ENCODE measurements at regions of chr6 and their contacts with region 1.

Region 1: GRCh38 chr6:56445818-56446217 is 196.9 kb downstream of the DST start:
- DNase-seq: no peak
- ATAC-seq: peak; percentile 57 to 94 (median 74)
- H3K4me3 ChIP-seq: no peak overlapping the region
- H3K27ac ChIP-seq: peak overlapping the region in 4 of 10 donors; percentile 14 to 60 (median 26)
- H3K4me1 ChIP-seq: peaks cover 0 to 36% (median 23%) of the 10 kb centered on the region in 9 donors
- H3K27me3 ChIP-seq: no peaks in the 10 kb centered on the region
- CTCF ChIP-seq: no peak

Region 2: DNA sequence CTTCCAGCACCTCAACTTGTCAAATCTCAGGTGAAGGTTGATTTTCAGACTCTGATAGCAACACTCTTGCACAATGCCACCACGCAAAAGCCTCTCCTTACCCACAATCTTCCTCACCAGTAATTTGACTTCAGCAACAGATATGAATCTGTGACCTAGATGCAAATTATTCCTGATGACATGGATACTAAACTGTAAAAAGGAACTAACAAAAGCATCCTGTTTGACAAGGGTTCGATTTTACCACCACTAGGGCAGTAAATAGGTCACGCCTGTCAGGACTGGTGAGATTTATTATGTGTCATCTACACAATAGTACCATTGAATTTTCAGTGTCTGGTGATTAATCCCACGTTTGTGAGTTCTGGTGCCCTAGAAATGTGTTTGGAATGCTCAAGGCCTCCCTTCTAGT is 64.0 kb before region 1 on chr6:
- intact Hi-C with region 1: loop called in 2 of 10 experiments (anchors 10 kb)
- DNase-seq: no peak
- ATAC-seq: no peak
- H3K4me3 ChIP-seq: no peak overlapping the region
- H3K27ac ChIP-seq: no peak overlapping the region
- H3K4me1 ChIP-seq: peaks cover 0 to 6% (median 0%) of the 10 kb centered on the region in 9 donors
- H3K27me3 ChIP-seq: no peaks in the 10 kb centered on the region
- CTCF ChIP-seq: no peak

Region 3: GRCh38 chr6:56524891-56525703 is 79.3 kb after region 1 on chr6:
- intact Hi-C with region 1: no loop called
- DNase-seq: no peak
- ATAC-seq: peak in 5 of 8 donors; percentile 38 to 64 (median 57)
- H3K4me3 ChIP-seq: no peak overlapping the region
- H3K27ac ChIP-seq: peak overlapping the region in 8 of 10 donors; percentile 17 to 62 (median 41)
- H3K4me1 ChIP-seq: peaks cover 3 to 71% (median 43%) of the 10 kb centered on the region in 9 donors
- H3K27me3 ChIP-seq: no peaks in the 10 kb centered on the region
- CTCF ChIP-seq: no peak